ENCODE measurements at regions of chr6 and their contacts with region 1.

Region 1: DNA sequence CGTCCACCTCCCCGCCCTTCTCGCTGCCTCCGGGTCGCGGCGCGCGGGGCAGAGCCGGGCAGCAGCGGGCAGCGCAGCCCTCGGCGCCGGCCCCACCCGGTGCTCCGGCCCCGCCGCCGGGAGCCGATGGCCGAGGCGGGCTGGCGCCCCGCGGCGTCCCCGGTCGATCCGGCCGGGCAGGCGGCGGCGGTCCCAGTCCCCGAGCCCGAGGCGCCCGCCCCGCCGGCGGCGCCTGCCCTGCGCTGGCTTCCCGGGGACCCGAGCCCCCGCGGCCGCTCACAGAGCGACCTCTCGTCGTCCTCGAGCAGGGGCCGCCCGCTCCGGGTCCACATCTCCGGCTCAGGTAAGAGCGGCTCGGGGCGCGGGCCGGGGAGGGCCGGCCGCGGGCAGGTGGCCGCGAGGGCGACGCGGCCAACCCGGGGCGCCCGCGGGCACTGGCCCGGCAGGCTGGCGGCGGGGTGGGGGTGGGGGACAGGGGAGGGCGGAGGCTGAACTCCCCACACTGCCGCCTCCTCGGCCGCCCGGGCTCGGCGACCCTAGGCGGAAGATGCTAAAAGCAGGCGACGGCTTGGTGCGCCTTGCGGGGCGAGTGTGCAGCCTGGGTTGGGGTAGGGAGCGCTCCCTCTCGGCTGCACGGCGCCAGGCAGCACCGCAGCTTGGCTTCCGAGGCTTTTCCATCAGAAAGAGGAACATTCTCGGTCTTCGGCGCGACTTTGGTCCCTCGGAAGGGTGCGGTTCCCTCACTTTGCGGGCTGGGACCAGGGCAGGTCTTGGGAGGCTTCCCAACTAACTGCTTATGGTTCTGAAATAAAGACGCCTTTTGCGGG is 25.6 kb upstream of the FUCA2 start:
- DNase-seq: peak; percentile 90
- H3K4me3 Mint-ChIP-seq: peak overlapping the region; percentile 88
- H3K27ac Mint-ChIP-seq: peak overlapping the region; percentile 76
- H3K4me1 Mint-ChIP-seq: peaks cover 37% of the 10 kb centered on the region
- H3K27me3 Mint-ChIP-seq: no peaks in the 10 kb centered on the region

Region 2: DNA sequence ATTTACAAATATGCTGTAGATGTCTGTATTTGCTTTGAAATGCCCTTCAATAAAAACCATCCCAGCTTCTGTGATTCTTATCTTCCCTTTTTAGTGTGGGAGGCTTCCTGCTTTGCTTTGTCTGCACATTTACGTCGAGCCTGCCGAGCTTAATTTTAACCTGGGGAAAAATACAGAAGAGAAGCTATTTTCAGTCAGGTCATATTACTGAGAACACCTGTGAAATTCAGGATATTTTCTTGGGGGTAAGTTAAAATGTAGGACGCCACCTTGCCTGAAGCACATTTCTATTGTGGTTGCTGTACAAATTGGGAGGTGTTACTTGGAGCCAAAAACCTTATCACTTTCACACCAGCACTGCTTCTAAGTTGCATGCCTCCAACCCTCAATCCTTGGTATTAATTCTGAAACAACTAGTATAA is 18.0 kb after region 1 on chr6:
- intact Hi-C with region 1: loop called (anchors 1 kb)
- DNase-seq: peak; percentile 58
- H3K4me3 Mint-ChIP-seq: peak overlapping the region; percentile 78
- H3K27ac Mint-ChIP-seq: peak overlapping the region; percentile 70
- H3K4me1 Mint-ChIP-seq: peaks cover 62% of the 10 kb centered on the region
- H3K27me3 Mint-ChIP-seq: no peaks in the 10 kb centered on the region

Region 3: DNA sequence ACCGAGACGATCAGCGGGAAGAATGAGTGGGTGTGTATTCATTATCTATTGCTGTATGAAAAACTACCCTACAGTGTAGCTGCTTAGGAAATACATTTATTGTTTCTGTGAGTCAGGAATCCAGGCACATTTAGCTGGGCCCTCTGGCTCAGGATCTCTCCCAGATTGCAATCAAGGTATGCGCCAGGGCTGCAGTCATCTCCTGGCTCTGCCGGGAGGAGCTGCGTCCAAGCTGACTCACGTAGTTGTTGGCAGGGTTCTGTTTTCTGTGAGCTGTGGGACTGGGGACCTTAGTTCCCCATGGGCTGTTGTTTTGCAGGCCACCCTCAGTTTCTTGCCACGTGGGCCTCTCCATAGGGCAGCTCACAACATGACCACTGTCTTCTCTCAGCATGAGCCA is 42.6 kb after region 1 on chr6:
- intact Hi-C with region 1: no loop called
- DNase-seq: no peak
- H3K4me3 Mint-ChIP-seq: no peak overlapping the region
- H3K27ac Mint-ChIP-seq: no peak overlapping the region
- H3K4me1 Mint-ChIP-seq: peaks cover 10% of the 10 kb centered on the region
- H3K27me3 Mint-ChIP-seq: no peaks in the 10 kb centered on the region